GM13976 (cell line): ENCODE measurements at regions of chr6 and their contacts with region 1.

Region 1: GRCh38 chr6:24581084-24581669 is 64.8 kb downstream of the KIAA0319 start:
- DNase-seq: peak; percentile 46
- CTCF ChIP-seq: peak; percentile 67

Region 2: DNA sequence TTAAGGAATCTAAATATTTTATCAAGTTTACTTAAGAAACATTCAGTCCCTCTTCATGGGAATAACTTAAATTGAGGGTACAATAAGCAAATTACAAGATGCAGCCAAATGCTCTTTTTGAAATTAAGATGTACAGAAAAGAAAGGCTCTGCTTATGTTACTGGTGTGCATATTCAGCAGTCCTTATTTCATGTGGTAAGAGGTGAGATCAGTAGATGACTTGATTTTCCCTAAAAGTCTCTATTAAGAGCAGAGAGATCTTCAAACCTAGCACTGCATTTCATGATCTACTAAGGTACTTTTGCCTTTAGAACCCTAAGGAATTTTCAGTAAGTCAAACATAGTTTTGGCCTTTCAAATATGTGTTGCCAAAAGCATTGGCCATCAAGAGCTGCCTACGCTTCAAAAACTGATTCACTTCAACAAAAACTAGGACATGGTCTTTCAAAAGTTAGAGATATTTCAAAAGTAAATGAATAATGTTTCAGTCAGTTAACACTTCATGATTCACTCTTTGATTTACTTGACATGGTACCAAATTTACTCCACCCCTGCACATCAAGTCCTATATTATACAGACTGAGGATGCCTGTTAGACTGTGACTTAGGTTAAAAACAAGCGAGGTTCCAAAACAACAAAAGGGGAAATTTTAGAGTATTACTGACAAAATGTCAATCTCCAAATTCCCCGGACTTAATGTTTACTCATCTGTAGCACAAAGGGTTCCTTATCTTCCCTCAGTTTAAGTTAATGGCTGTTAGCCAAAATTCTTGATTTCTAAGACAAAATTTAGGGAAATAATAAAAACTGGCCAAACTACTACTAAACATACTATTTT is 118.6 kb after region 1 on chr6:
- in situ Hi-C with region 1: loop called (anchors 5 kb)
- DNase-seq: no peak
- CTCF ChIP-seq: no peak

Region 3: GRCh38 chr6:24766680-24767462 is 185.7 kb after region 1 on chr6:
- in situ Hi-C with region 1: loop called (anchors 10 kb)
- DNase-seq: peak; percentile 76
- CTCF ChIP-seq: peak; percentile 29